Activated T-helper 1 cell treated with anti-CD3 and anti-CD28 coated beads, Interleukin-12 subunit alpha, Interleukin-12 subunit beta, Interleukin-2, Interleukin-4 antibody, amounts not matched to agents 30 ng/mL and 10 ng/mL and 1 ng/mL, durations not matched to agents 14 hours and 24 hours and 36 hours (primary cell): ENCODE measurements at regions of chr3 and their contacts with region 1.

Region 1: DNA sequence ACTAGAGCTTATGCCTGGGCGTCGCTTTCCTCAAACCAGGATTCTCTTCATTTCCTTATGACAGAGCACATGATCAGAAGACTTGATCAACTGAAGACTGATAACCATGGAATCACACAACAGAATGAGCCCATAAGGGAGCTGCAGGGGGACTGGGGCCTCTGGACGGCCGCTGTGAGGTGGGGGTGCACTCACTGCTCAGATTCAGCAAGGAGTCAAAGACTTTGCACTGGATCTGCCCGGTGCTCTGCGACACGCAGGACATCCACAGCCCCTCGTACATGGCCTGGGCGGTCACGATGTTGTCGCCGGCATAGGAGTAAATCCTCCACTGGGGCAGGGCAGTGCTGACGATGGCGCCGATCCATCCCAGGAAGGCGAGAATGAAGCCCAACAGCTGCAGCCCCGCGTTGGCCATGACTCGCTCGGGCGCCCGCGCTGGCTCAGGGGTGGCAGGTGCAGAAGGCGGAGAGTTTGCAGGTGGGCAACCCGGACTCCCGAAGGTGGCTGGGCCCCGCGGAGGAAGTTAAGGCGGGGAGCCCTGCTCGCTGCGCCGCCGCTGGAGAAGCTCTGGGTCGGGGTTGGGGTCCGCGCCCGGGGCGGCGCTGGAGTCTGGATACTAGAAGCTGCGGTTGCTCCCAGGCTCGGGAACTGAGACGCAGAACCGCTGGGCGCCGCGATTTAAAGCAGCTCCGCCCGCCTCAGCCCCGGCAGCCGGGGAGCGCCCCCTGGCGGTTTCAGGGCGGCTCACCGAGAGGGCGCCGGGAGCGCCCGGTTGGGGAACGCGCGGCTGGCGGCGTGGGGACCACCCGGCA is at the start of gene CLDN1:
- DNase-seq: peak; percentile 61
- H3K4me3 Mint-ChIP-seq: peak within 1 kb of the TSS; percentile 78
- H3K27ac Mint-ChIP-seq: no peak within 1 kb of the TSS
- H3K4me1 Mint-ChIP-seq: peaks cover 40% of the 10 kb centered on the region
- H3K27me3 Mint-ChIP-seq: peaks cover 21% of the 10 kb centered on the region
- total RNA-seq, gene CLDN1: 0.22 and 0.34 TPM in 2 replicates

Region 2: GRCh38 chr3:189961525-189962161 is 360.4 kb before region 1 on chr3:
- intact Hi-C with region 1: loop called (anchors 2 kb)
- DNase-seq: peak; percentile 49
- H3K4me3 Mint-ChIP-seq: no peak overlapping the region
- H3K27ac Mint-ChIP-seq: no peak overlapping the region
- H3K4me1 Mint-ChIP-seq: peaks cover 7% of the 10 kb centered on the region
- H3K27me3 Mint-ChIP-seq: peaks cover 2% of the 10 kb centered on the region

Region 3: GRCh38 chr3:190131329-190131728 is 190.7 kb before region 1 on chr3:
- intact Hi-C with region 1: loop called (anchors 10 kb)
- DNase-seq: no peak
- H3K4me3 Mint-ChIP-seq: no peak overlapping the region
- H3K27ac Mint-ChIP-seq: no peak overlapping the region
- H3K4me1 Mint-ChIP-seq: no peaks in the 10 kb centered on the region
- H3K27me3 Mint-ChIP-seq: peaks cover 14% of the 10 kb centered on the region

Region 4: DNA sequence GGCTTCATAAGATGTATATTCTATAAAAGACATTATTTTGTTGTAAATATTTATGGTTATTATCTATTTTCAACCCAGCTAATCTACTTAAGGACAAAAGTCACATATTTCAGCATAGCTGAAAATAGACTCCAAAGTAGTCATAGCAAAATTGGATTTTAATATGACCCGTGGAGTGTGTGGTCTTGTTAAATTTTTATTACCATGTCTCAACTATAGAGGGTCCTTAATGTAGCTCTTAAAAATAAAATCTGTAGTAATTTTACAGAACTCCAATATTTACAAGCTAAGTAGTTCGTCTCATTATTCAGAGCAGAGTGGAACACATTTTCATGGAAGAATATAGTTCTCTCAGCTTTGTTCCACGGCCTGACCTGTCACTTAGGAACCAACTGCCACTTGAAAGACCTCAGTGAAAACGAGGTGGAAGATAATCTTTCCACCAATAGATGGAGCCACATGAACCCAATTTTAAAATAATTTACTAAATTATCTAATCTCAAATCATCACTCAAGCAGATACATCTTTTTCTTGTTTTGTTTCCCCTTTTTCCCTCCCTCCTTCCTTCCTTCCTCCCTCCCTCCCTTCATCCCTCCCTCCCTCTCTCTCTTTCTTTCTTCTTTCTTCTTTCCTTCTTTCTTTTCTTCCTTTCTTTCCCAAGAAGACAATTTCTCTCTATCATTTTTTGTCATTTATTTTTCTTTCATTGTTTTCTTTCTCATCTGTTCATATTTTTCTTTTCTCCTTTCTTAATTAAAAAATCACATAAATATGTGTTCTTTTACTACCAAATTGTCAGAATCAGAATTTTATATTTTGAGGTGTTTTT is 96.9 kb before region 1 on chr3:
- intact Hi-C with region 1: loop called (anchors 1 kb)
- DNase-seq: no peak
- H3K4me3 Mint-ChIP-seq: no peak overlapping the region
- H3K27ac Mint-ChIP-seq: no peak overlapping the region
- H3K4me1 Mint-ChIP-seq: no peaks in the 10 kb centered on the region
- H3K27me3 Mint-ChIP-seq: peaks cover 2% of the 10 kb centered on the region

Region 5: DNA sequence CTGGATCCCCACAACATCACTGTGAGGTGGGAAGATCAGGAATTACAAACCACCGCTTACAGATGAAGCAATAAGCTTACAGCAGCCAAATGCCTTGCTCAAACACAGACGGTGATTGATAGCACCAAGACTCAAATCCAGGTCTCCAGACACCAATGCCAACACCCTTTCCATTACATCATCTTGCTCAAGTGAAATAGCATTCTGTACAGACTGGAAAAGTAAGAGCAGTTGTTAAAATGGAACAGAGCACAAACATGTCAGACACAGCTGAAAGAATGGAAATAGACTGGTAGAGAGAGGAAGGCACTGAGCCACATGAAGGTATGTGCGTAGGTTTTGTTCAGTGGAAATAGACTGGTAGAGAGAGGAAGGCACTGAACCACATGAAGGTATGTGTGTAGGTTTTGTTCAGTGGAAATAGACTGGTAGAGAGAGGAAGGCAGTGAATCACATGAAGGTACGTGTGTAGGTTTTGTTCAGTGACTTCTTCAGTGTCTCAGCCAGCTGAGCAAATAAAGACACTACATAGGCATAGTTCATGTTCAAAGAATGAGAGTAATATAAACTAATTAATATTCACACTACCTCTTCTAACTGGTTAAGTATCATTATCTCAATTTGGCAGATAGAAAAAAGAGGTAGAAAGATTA is 15.4 kb before region 1 on chr3:
- intact Hi-C with region 1: loop called (anchors 1 kb)
- DNase-seq: no peak
- H3K4me3 Mint-ChIP-seq: no peak overlapping the region
- H3K27ac Mint-ChIP-seq: peak overlapping the region; percentile 54
- H3K4me1 Mint-ChIP-seq: peaks cover 21% of the 10 kb centered on the region
- H3K27me3 Mint-ChIP-seq: no peaks in the 10 kb centered on the region

Region 6: DNA sequence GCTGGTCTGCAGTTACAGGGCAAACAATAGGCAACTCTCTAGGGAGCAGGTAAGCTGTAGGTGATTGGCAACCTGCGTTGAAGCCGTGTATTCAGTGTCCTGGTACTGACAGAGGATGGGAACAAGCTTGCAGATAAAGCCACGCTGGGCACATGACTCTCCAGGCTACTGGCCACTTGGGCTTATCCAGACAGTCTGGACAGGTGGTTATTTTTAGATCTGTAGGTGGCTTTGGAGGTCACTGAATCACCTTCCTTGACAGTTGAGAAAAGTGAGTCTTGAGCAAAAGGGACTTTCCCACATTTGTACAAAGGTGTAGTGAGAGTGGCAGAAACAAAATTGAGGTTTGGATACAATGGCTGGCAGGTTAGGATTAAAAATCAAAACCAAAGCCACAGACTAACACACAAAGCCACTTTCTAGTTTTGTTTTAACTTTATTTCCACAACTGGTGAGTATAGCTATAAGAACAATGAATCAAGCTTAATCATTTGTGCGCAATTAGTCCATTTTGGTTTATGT is 169.6 kb after region 1 on chr3:
- intact Hi-C with region 1: loop called (anchors 10 kb)
- DNase-seq: no peak
- H3K4me3 Mint-ChIP-seq: no peak overlapping the region
- H3K27ac Mint-ChIP-seq: peak overlapping the region; percentile 7
- H3K4me1 Mint-ChIP-seq: peaks cover 27% of the 10 kb centered on the region
- H3K27me3 Mint-ChIP-seq: peaks cover 67% of the 10 kb centered on the region

Region 7: DNA sequence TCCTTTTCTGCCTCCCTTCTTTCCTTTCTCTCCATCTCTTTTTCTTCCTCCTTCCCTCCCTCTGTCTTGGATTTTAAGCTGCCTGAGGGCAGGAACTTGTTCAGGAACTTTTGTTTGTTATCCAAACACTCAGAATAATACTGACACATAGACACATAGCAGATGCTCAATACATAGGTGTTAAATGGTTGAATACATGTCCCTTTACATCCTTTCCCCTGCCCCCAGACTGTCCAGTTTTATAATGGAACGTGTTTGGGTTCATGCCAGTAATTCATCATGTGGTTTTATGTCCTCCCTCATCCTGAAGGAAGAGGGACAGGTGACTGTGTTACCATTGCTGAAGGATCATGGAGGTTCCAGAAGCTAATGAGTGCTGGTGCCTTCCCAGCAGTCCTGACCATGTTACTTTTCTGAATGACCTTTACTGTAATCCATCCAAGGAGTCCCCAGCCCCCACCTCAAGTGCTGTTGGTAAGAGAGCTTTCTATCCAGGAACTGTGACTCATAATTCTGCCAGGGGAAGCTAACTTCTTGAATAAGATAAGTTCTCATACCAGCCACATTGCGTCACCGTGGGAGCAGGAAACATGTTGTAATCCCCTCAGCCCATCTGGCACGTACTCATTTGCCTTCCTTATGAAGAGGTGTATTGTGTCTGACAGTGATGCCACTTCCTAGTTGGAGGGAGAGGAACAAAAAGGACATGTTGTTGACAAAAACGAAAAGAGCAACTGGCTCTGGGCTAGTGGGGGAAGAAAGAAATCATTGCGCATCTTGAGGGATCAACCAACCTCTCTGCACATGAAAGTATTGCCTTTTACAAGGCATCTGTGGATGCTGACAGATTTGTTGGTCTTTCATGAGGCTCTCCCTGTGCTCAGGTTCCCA is 244.3 kb after region 1 on chr3:
- intact Hi-C with region 1: no loop called
- DNase-seq: peak; percentile 67
- H3K4me3 Mint-ChIP-seq: peak overlapping the region; percentile 42
- H3K27ac Mint-ChIP-seq: peak overlapping the region; percentile 97
- H3K4me1 Mint-ChIP-seq: peaks cover 83% of the 10 kb centered on the region
- H3K27me3 Mint-ChIP-seq: no peaks in the 10 kb centered on the region